ENCODE measurements at regions of chr6 and their contacts with region 1.

Region 1: GRCh38 chr6:33771146-33772081 is 17.5 kb downstream of the LEMD2 start:
- DNase-seq: peak; percentile 97
- H3K4me3 ChIP-seq: peak overlapping the region; percentile 36; the same call in 1 of the 2 replicates
- H3K27ac ChIP-seq: peak overlapping the region; percentile 84
- H3K4me1 ChIP-seq: peaks cover 35% of the 10 kb centered on the region
- H3K27me3 ChIP-seq: no peaks in the 10 kb centered on the region

Region 2: DNA sequence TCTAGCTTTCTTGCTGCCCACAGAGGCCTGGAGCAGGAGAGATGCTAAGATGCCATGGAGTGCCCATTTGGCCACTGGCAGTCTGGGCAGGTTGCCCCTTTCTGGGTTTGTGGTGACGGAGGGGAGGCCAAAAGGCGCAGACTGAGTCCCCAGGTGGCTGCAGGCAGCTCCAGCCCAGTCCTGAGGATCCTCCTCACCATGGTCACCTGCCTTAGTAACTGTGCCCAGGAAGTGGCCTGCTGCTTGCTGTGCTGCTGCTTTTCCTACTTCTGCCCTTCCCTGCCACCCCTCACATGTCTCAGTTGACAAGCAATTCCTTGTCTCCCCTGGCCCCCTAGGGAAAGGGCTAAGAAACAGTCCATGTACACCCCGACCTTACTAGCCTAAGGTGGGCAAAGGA is 415.1 kb before region 1 on chr6:
- in situ Hi-C with region 1: no loop called
- DNase-seq: no peak
- H3K4me3 ChIP-seq: no peak overlapping the region
- H3K27ac ChIP-seq: no peak overlapping the region
- H3K4me1 ChIP-seq: no peaks in the 10 kb centered on the region
- H3K27me3 ChIP-seq: peaks cover 8% of the 10 kb centered on the region; the same call in 1 of the 2 replicates

Region 3: GRCh38 chr6:34027445-34027936 is 256.1 kb after region 1 on chr6:
- in situ Hi-C with region 1: loop called (anchors 10 kb)
- DNase-seq: peak; percentile 70
- H3K4me3 ChIP-seq: no peak overlapping the region
- H3K27ac ChIP-seq: no peak overlapping the region
- H3K4me1 ChIP-seq: no peaks in the 10 kb centered on the region
- H3K27me3 ChIP-seq: no peaks in the 10 kb centered on the region; the same call in 1 of the 2 replicates

Region 4: DNA sequence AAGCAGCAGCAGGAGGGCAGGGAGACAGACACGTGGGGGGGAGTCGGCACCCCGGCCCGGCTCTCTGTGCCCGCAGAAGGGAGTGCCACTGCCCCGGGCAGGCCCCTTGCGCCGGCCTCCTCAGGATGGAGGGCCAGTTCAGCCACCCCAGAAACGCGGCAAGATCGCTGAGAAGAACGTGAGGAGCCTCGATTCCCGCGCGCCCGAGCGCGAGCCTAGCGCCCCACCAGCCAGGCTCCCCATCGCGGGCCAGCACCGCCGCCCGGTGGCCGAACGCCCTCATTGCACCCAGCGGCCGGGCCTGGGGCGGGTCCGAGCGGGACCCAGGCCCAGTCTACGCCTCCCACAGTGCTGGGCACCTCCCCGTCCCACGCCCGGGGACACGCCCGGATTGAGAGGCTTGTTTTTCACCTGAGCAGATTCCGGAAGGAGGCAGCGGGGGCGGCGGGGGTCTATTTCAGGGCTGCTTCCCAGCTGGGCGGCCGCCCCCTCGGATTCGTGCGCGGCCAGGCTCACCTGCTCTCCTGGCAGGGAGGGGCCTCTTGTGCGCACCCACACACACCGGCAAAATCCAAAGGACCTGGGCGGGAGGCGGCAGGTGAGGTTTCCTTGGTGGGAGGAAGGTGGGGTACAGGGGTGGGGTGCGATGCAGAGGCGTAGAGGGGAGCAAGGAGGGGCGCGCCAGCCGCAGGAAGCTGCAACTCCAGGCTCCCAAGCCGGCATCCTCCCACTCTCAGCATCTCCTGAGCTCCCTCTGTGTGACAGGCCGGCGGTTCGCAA is 383.4 kb after region 1 on chr6:
- in situ Hi-C with region 1: loop called (anchors 10 kb)
- DNase-seq: peak; percentile 80
- H3K4me3 ChIP-seq: peak overlapping the region; percentile 61
- H3K27ac ChIP-seq: no peak overlapping the region
- H3K4me1 ChIP-seq: no peaks in the 10 kb centered on the region
- H3K27me3 ChIP-seq: peaks cover 29% of the 10 kb centered on the region

Measured in GM23248 (cell line).